ENCODE measurements at regions of chr1 and their contacts with region 1.

Region 1: GRCh38 chr1:92837062-92837461 is 5.2 kb downstream of the RPL5 start:
- DNase-seq: no peak
- H3K4me3 Mint-ChIP-seq: peak overlapping the region; percentile 41
- H3K27ac Mint-ChIP-seq: no peak overlapping the region
- H3K4me1 Mint-ChIP-seq: peaks cover 45% of the 10 kb centered on the region
- H3K27me3 Mint-ChIP-seq: no peaks in the 10 kb centered on the region
- CTCF ChIP-seq: no peak

Region 2: GRCh38 chr1:92851729-92852128 is 14.7 kb after region 1 on chr1:
- CTCF ChIA-PET with region 1: interaction called, 4 read pairs
- POLR2A ChIA-PET with region 1: interaction called, 12 read pairs
- intact Hi-C with region 1: no loop called
- DNase-seq: no peak
- H3K4me3 Mint-ChIP-seq: no peak overlapping the region
- H3K27ac Mint-ChIP-seq: no peak overlapping the region
- H3K4me1 Mint-ChIP-seq: peaks cover 6% of the 10 kb centered on the region
- H3K27me3 Mint-ChIP-seq: no peaks in the 10 kb centered on the region
- CTCF ChIP-seq: no peak